Activated CD8-positive, alpha-beta memory T cell treated with anti-CD3 and anti-CD28 coated beads, Interleukin-2, amount 10 ng/mL, durations not matched to agents 7 days and 5 days (primary cell): ENCODE measurements at regions of chr5 and their contacts with region 1.

Region 1: DNA sequence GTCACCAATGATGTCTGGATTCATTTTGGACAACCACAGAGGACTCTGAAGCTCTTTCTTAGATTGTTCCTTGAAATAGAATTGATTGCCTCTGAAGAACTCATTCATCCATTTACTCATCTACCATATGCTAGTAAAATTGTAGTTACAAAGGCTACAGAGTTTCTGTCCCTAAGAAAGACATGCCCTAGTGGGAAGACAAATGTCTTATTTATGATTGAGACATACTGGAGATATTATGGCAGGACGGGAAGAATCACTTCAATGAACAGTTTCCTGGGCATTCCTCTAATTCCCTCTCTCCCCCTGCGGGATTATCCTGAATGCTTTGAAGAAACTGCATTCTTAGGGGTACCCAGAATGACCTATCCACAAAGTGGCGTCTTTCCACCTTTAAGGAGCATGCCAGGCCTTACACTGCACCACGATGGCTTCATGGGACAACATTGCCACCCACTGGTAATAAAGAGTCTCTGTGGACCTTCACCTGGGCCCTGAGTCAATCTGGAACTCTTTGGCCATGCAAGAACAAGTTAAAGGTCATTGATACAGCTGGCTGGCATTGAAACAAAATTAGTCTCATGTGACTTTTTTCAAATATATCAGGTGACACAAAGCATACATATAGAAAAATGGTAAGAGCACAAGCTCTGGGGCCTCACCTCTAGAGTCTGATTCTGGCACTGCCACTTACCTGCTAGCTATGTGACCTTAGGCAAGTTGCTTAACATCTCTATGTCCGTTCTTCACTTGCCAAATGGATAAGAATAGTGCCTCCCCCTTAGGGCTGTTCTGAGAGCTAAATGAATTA is 32.1 kb downstream of the ANKRD55 start:
- DNase-seq: peak; percentile 62
- ATAC-seq: peak; percentile 80
- H3K4me3 Mint-ChIP-seq: no peak overlapping the region
- H3K27ac Mint-ChIP-seq: no peak overlapping the region
- H3K4me1 Mint-ChIP-seq: no peaks in the 10 kb centered on the region
- H3K27me3 Mint-ChIP-seq: no peaks in the 10 kb centered on the region

Region 2: GRCh38 chr5:55982957-55983381 is 218.1 kb before region 1 on chr5:
- CTCF ChIA-PET with region 1: interaction called, 14 read pairs
- DNase-seq: no peak
- ATAC-seq: no peak
- H3K4me3 Mint-ChIP-seq: no peak overlapping the region
- H3K27ac Mint-ChIP-seq: no peak overlapping the region
- H3K4me1 Mint-ChIP-seq: peaks cover 16% of the 10 kb centered on the region
- H3K27me3 Mint-ChIP-seq: no peaks in the 10 kb centered on the region